CD14-positive monocyte (primary cell): ENCODE measurements at regions of chr11 and their contacts with region 1.

Region 1: GRCh38 chr11:73307323-73308002 is 613 bp upstream of the ARHGEF17 start:
- DNase-seq: peak; percentile 89 to 93 (median 90)
- H3K4me3 ChIP-seq: peak overlapping the region; percentile 55 to 78 (median 73)
- H3K4me3 Mint-ChIP-seq: peak overlapping the region; percentile 80 to 94
- H3K27ac ChIP-seq: no peak overlapping the region
- H3K27ac Mint-ChIP-seq: peak overlapping the region; percentile 47 to 95 (median 83)
- H3K4me1 ChIP-seq: peaks cover 27 to 34% of the 10 kb centered on the region in 2 donors
- H3K4me1 Mint-ChIP-seq: peaks cover 20% of the 10 kb centered on the region
- H3K27me3 ChIP-seq: peaks cover 0 to 15% of the 10 kb centered on the region in 2 donors
- H3K27me3 Mint-ChIP-seq: peaks cover 13 to 31% (median 16%) of the 10 kb centered on the region in 3 donors
- CTCF ChIP-seq: peak; percentile 73

Region 2: DNA sequence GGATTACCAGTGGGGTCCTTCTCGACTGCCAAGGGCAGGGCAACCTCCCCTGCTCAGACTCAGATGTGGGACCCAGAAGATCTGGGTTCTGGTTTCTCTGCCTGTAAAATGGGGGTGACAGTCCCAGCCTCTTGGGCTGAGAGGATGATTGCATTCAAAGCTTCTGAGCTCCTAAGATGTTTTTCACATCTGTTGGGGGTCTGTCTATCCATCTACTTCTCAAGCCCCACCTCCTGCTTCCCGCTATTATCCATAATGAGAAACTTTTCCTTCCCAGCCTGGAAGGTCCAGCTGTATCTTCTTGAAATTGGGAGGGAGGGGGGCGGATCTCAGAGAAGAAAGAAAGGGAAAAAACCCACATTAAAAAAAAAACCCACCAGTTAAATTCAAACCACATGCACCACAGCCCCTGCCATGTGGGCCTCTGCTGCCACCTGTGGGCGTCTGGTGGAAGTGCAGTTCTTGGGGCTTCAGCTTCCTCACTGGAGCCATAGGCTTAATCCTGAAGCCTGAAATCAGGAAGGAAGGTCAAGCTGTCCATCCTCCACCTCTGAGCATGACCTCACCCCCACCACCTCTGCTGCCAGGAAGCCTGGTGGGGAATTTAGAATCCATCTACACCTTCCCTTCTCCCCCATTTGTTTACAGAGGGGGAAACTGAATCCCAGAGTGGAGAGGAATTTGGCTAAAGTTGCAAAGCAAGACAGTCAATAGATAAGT is 27.9 kb after region 1 on chr11:
- intact Hi-C with region 1: loop called (anchors 1 to 5 kb)
- DNase-seq: peak; percentile 61 to 78 (median 77)
- H3K4me3 ChIP-seq: no peak overlapping the region
- H3K4me3 Mint-ChIP-seq: no peak overlapping the region
- H3K27ac ChIP-seq: no peak overlapping the region
- H3K27ac Mint-ChIP-seq: no peak overlapping the region
- H3K4me1 ChIP-seq: peaks cover 2 to 6% of the 10 kb centered on the region in 2 donors
- H3K4me1 Mint-ChIP-seq: peaks cover 7% of the 10 kb centered on the region
- H3K27me3 ChIP-seq: no peaks in the 10 kb centered on the region
- H3K27me3 Mint-ChIP-seq: peaks cover 0 to 7% (median 4%) of the 10 kb centered on the region in 3 donors
- CTCF ChIP-seq: peak; percentile 97

Region 3: GRCh38 chr11:73384872-73385689 is 77.6 kb after region 1 on chr11:
- intact Hi-C with region 1: loop called (anchors 5 to 10 kb)
- DNase-seq: peak; percentile 93 to 94 (median 93)
- H3K4me3 ChIP-seq: peak overlapping the region; percentile 3 to 95 (median 38)
- H3K4me3 Mint-ChIP-seq: peak overlapping the region; percentile 69 to 83
- H3K27ac ChIP-seq: peak overlapping the region; percentile 84 to 98
- H3K27ac Mint-ChIP-seq: peak overlapping the region; percentile 95 to 99 (median 98)
- H3K4me1 ChIP-seq: peaks cover 100% of the 10 kb centered on the region in 2 donors
- H3K4me1 Mint-ChIP-seq: peaks cover 99% of the 10 kb centered on the region
- H3K27me3 ChIP-seq: no peaks in the 10 kb centered on the region
- H3K27me3 Mint-ChIP-seq: no peaks in the 10 kb centered on the region
- CTCF ChIP-seq: no peak

Region 4: GRCh38 chr11:73393479-73394380 is 86.3 kb after region 1 on chr11:
- intact Hi-C with region 1: loop called (anchors 5 to 10 kb)
- DNase-seq: peak; percentile 70 to 75 (median 75)
- H3K4me3 ChIP-seq: no peak overlapping the region
- H3K4me3 Mint-ChIP-seq: peak overlapping the region in 1 of 2 donors; percentile 37
- H3K27ac ChIP-seq: peak overlapping the region; percentile 61 to 63
- H3K27ac Mint-ChIP-seq: peak overlapping the region in 6 of 7 donors; percentile 76 to 93 (median 84)
- H3K4me1 ChIP-seq: peaks cover 29 to 46% of the 10 kb centered on the region in 2 donors
- H3K4me1 Mint-ChIP-seq: peaks cover 36% of the 10 kb centered on the region
- H3K27me3 ChIP-seq: no peaks in the 10 kb centered on the region
- H3K27me3 Mint-ChIP-seq: peaks cover 0 to 3% (median 0%) of the 10 kb centered on the region in 3 donors
- CTCF ChIP-seq: peak; percentile 83